ENCODE measurements at regions of chr22 and their contacts with region 1.

Region 1: DNA sequence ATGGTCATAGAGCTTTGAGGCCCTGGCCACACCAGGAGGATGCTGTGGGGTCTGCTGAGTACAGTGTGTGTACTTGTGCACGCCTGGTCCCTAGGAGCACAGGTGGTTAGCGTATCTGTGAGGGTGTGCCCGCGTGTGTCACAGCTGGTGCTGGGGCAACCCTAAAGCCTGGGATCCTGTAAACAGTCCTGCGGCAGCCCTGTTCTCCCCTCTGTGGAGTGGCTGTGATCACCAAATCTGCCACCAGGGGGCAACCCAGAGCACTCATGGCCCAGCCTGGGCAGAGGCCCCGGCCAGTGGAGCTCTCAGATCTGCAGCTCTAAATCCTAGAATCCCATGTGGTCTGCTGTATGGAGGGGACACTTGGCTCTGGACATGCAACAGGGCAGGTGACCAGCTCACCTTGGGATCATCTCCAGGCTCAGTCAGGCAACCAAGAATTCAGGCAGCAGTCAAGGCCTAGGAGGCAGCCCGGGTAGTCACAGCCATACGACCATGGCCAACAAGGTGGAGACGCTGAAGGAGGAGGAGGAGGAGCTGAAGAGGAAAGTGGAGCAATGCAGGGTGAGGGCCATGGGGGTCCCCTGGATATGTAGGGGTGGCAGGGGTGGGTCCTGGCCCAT is 3.9 kb downstream of the SH3BP1 start:
- DNase-seq: peak; percentile 92
- H3K4me3 Mint-ChIP-seq: no peak overlapping the region
- H3K27ac Mint-ChIP-seq: no peak overlapping the region
- H3K4me1 Mint-ChIP-seq: peaks cover 8% of the 10 kb centered on the region
- H3K27me3 Mint-ChIP-seq: no peaks in the 10 kb centered on the region
- CTCF ChIP-seq: peak; percentile 94

Region 2: DNA sequence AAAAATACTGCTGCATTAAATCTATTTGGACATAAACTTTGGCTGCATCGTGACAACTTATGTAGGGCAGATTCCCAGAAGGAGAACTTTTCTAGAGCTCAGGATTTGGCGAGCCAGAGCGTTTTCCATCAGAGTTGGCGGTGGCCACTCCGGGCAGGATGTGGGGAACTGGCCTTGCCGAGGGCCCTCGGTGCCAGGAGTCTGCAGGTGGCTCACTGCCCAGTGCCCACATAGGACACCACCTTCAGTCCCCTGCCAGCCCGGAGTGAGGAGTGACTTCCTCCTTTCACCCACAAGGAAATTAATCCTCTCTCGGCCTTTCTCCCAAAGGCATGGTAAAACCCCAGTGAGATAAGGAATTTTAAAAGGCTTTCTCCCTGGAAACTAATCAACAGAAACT is 61.8 kb before region 1 on chr22:
- CTCF ChIA-PET with region 1: no interaction called
- intact Hi-C with region 1: no loop called
- DNase-seq: peak; percentile 83
- H3K4me3 Mint-ChIP-seq: no peak overlapping the region
- H3K27ac Mint-ChIP-seq: peak overlapping the region; percentile 40
- H3K4me1 Mint-ChIP-seq: peaks cover 21% of the 10 kb centered on the region
- H3K27me3 Mint-ChIP-seq: no peaks in the 10 kb centered on the region
- CTCF ChIP-seq: no peak

Region 3: DNA sequence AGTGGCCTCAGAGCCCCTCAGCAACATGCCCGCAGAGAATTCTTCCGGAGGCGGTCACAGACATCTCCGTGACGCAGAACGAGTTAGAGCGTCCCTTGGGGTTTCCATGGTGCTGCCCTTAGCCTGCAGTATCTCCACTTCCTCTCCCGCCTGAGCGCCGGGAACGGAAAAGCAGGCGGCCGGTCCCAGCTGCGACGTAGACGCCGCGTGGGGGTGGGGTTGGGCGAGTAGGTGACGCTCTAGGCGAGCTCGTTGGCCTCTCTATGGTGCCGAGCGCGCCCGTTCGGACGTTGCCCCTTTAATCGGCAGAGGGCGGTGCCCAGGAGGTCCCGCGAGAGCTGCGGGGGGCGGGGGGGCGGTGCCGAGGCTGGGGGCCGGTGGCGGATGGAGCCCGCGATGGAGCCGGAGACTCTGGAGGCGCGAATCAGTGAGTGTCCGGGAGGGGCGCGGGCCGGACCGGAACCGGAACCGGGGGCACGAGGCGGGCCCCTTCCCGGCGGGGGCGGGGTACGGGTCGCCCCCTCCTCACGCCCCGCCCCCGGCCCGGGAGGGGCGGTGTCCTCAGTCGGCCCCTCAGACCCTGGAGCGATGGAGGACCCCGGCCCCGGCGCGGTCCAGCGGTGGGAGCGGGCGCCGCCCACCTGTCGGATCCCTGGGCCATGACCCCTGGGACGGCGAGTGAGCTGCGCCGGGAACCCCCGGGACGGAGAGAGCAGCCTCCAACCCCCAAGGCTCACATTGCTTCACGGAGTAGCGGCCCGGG is 34.7 kb before region 1 on chr22 and contains the start of gene GGA1:
- CTCF ChIA-PET with region 1: interaction called, 16 read pairs
- intact Hi-C with region 1: no loop called
- DNase-seq: peak; percentile 95
- H3K4me3 Mint-ChIP-seq: peak within 1 kb of the TSS; percentile 89
- H3K27ac Mint-ChIP-seq: peak within 1 kb of the TSS; percentile 87
- H3K4me1 Mint-ChIP-seq: peaks cover 10% of the 10 kb centered on the region
- H3K27me3 Mint-ChIP-seq: no peaks in the 10 kb centered on the region
- CTCF ChIP-seq: no peak
- total RNA-seq, gene GGA1: 89.8 and 95.3 TPM in 2 replicates

Region 4: DNA sequence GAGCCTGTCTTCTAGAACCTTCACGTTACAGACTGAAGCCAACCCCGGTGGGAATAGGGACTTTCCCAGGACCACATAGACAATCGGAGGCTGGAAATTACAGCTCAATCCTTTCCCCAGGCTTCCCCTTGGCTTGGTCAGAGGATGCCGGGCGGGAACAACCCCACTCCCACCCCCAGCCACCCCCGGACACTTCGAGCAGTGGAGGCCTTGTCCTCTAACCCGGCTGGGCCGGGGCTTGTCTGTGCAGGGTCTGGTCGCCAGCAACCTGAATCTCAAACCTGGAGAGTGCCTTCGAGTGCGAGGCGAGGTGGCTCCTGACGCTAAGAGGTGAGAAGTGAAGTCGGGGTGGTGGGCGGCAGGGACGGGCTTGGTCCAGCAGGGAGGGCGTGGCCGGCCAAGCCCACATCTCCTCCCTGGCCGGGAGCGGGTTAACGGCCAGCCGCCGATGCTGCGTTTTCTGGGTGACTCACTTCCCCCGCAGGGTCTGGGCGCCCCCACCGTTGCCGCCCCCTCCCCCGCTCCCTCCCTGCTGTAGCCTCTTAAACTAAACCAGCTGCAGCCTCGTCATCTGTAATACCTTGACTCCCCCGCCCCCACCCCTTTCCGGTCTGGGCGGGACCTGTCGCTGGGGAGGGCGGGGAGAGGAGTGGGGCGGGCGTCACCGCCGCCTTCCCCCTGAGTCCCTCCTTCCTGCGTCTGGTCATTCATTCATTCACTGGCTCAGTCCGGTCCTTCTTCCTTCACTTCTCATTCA is 33.6 kb after region 1 on chr22:
- CTCF ChIA-PET with region 1: interaction called, 42 read pairs
- intact Hi-C with region 1: loop called (anchors 1 kb)
- DNase-seq: peak; percentile 92
- H3K4me3 Mint-ChIP-seq: peak overlapping the region; percentile 68
- H3K27ac Mint-ChIP-seq: peak overlapping the region; percentile 43
- H3K4me1 Mint-ChIP-seq: peaks cover 9% of the 10 kb centered on the region
- H3K27me3 Mint-ChIP-seq: no peaks in the 10 kb centered on the region
- CTCF ChIP-seq: no peak

Region 5: DNA sequence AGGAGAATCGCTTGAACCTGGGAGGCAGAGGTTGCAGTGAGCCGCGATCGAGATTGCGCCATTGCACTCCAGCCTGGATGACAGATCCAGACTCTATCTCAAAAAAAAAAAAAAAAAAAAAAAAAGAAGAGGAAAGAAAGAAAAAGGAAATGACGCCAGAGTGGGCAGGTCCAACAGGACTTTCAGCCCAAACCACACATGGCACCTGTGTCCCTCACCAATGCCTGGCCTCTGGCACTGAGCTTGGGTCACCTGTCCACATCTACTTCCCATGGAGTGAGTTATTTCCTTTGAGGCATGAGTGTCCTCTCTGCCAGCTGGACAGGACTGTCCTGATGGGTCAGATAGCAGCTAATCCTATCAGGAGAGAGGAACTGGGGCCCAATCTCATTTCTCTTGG is 149.2 kb after region 1 on chr22:
- CTCF ChIA-PET with region 1: interaction called, 12 read pairs
- intact Hi-C with region 1: loop called (anchors 10 kb)
- DNase-seq: no peak
- H3K4me3 Mint-ChIP-seq: no peak overlapping the region
- H3K27ac Mint-ChIP-seq: no peak overlapping the region
- H3K4me1 Mint-ChIP-seq: peaks cover 12% of the 10 kb centered on the region
- H3K27me3 Mint-ChIP-seq: no peaks in the 10 kb centered on the region
- CTCF ChIP-seq: no peak

Region 6: GRCh38 chr22:37862570-37863325 is 219.4 kb after region 1 on chr22:
- CTCF ChIA-PET with region 1: interaction called, 10 read pairs
- intact Hi-C with region 1: no loop called
- DNase-seq: no peak
- H3K4me3 Mint-ChIP-seq: no peak overlapping the region
- H3K27ac Mint-ChIP-seq: no peak overlapping the region
- H3K4me1 Mint-ChIP-seq: no peaks in the 10 kb centered on the region
- H3K27me3 Mint-ChIP-seq: no peaks in the 10 kb centered on the region
- CTCF ChIP-seq: no peak

Measured in Calu3 (cell line).